Cardiac septum (tissue), 1 donor: ENCODE measurements at regions of chr3 and their contacts with region 1.

Region 1: GRCh38 chr3:71875461-71875947 is 90.6 kb upstream of the PROK2 start:
- DNase-seq: peak; percentile 89

Region 2: GRCh38 chr3:73086071-73086494 is 1210.6 kb after region 1 on chr3:
- intact Hi-C with region 1: loop called (anchors 10 kb)
- DNase-seq: peak; percentile 61